GM12878 (cell line): ENCODE measurements at regions of chrX and their contacts with region 1.

Region 1: DNA sequence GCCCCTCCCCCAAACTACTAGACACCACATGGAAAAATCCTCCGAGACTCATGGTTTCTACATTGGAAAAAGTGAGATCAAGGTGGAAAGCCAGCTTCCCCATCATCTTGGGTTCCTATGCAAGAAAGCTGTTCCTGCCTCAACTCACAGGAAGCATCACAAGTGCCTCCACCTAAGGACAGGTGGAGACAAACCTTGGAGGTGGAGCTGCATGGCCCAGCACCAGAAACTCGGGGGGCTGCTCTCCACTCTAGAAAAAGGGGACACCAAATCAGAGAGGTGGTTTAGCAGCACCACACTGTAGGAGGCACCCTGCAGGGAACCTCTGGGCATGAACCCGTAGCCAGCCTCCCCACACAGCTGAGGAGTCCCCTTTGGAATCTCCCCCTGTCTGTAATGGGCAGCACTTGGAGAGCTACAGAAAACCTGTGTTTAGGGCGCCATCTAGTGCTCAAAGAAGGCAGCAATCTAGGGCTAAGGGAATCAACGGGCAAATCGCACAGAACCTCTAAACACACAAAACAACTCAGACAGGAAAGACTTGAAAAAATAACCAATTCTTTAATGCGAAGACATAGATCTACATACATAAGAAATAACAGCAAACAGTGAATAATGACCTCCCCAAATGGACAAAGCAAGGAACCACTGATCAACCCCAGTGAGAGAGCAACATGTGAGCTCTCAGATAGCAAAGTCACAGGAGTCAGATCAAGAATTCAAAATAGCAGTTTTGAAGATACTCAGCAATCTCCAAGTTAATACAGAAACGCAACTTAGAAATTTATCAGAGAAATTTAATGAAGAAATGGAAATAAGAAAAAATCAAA is 37.0 kb upstream of the ZBTB33 start:
- DNase-seq: peak; percentile 36
- ATAC-seq: peak; percentile 99
- H3K4me3 ChIP-seq: no peak overlapping the region
- H3K27ac ChIP-seq: no peak overlapping the region
- H3K4me1 ChIP-seq: no peaks in the 10 kb centered on the region
- H3K27me3 ChIP-seq: no peaks in the 10 kb centered on the region
- CTCF ChIP-seq: peak; percentile 81 to 94 (median 87)
- EP300 ChIP-seq: no peak
- POLR2A ChIP-seq: no peak
- RAD21 ChIP-seq: peak; percentile 78

Region 2: GRCh38 chrX:120029354-120029753 is 184.3 kb before region 1 on chrX:
- CTCF ChIA-PET with region 1: interaction called, 10 read pairs
- POLR2A ChIA-PET with region 1: no interaction called
- RAD21 ChIA-PET with region 1: interaction called, 4 read pairs
- SMC1A ChIA-PET with region 1: interaction called, 3 read pairs
- in situ Hi-C with region 1: no loop called
- intact Hi-C with region 1: loop called (anchors 10 kb)
- DNase-seq: no peak
- ATAC-seq: peak; percentile 71
- H3K4me3 ChIP-seq: no peak overlapping the region
- H3K27ac ChIP-seq: no peak overlapping the region
- H3K4me1 ChIP-seq: no peaks in the 10 kb centered on the region
- H3K27me3 ChIP-seq: no peaks in the 10 kb centered on the region
- CTCF ChIP-seq: peak in 2 of 3 experiments; percentile 13 to 22; a peak in 2 of 6 replicates
- EP300 ChIP-seq: no peak
- POLR2A ChIP-seq: no peak
- RAD21 ChIP-seq: no peak

Region 3: GRCh38 chrX:120200851-120201250 is 12.8 kb before region 1 on chrX:
- CTCF ChIA-PET with region 1: interaction called, 18 read pairs
- POLR2A ChIA-PET with region 1: no interaction called
- RAD21 ChIA-PET with region 1: interaction called, 5 read pairs
- SMC1A ChIA-PET with region 1: interaction called, 11 read pairs
- in situ Hi-C with region 1: no loop called
- intact Hi-C with region 1: no loop called
- DNase-seq: no peak
- ATAC-seq: no peak
- H3K4me3 ChIP-seq: no peak overlapping the region
- H3K27ac ChIP-seq: no peak overlapping the region
- H3K4me1 ChIP-seq: no peaks in the 10 kb centered on the region
- H3K27me3 ChIP-seq: no peaks in the 10 kb centered on the region; a peak in 1 of 4 replicates
- CTCF ChIP-seq: no peak
- EP300 ChIP-seq: no peak
- POLR2A ChIP-seq: no peak
- RAD21 ChIP-seq: no peak

Region 4: DNA sequence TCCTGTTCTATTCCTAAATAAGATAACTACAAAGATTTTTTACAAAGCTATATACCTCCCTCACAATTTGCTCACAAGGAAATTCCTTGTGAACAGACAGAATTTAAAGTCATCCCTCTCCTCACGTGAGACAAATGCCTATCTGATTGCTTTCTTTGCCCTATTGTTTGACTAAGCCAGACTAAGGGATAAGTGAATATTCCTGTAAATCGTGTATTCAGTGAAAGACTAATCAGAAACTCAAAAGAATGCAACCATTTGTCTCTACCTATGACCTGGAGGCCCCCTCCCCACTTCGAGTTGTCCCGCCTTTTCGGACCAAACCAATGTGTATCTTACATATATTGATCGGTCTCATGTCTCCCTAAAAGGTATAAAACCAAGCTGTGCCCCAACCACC is 21.6 kb after region 1 on chrX:
- CTCF ChIA-PET with region 1: interaction called, 51 read pairs
- POLR2A ChIA-PET with region 1: no interaction called
- RAD21 ChIA-PET with region 1: no interaction called
- SMC1A ChIA-PET with region 1: interaction called, 12 read pairs
- in situ Hi-C with region 1: no loop called
- intact Hi-C with region 1: no loop called
- DNase-seq: no peak
- ATAC-seq: no peak
- H3K4me3 ChIP-seq: no peak overlapping the region
- H3K27ac ChIP-seq: no peak overlapping the region
- H3K4me1 ChIP-seq: no peaks in the 10 kb centered on the region
- H3K27me3 ChIP-seq: no peaks in the 10 kb centered on the region
- CTCF ChIP-seq: no peak
- EP300 ChIP-seq: no peak
- POLR2A ChIP-seq: no peak
- RAD21 ChIP-seq: no peak

Region 5: GRCh38 chrX:120294651-120295050 is 81.0 kb after region 1 on chrX:
- CTCF ChIA-PET with region 1: interaction called, 29 read pairs
- POLR2A ChIA-PET with region 1: no interaction called
- RAD21 ChIA-PET with region 1: no interaction called
- SMC1A ChIA-PET with region 1: interaction called, 4 read pairs
- in situ Hi-C with region 1: no loop called
- intact Hi-C with region 1: no loop called
- DNase-seq: no peak
- ATAC-seq: no peak
- H3K4me3 ChIP-seq: no peak overlapping the region
- H3K27ac ChIP-seq: no peak overlapping the region
- H3K4me1 ChIP-seq: no peaks in the 10 kb centered on the region
- H3K27me3 ChIP-seq: no peaks in the 10 kb centered on the region
- CTCF ChIP-seq: no peak
- EP300 ChIP-seq: no peak
- POLR2A ChIP-seq: no peak
- RAD21 ChIP-seq: no peak

Region 6: DNA sequence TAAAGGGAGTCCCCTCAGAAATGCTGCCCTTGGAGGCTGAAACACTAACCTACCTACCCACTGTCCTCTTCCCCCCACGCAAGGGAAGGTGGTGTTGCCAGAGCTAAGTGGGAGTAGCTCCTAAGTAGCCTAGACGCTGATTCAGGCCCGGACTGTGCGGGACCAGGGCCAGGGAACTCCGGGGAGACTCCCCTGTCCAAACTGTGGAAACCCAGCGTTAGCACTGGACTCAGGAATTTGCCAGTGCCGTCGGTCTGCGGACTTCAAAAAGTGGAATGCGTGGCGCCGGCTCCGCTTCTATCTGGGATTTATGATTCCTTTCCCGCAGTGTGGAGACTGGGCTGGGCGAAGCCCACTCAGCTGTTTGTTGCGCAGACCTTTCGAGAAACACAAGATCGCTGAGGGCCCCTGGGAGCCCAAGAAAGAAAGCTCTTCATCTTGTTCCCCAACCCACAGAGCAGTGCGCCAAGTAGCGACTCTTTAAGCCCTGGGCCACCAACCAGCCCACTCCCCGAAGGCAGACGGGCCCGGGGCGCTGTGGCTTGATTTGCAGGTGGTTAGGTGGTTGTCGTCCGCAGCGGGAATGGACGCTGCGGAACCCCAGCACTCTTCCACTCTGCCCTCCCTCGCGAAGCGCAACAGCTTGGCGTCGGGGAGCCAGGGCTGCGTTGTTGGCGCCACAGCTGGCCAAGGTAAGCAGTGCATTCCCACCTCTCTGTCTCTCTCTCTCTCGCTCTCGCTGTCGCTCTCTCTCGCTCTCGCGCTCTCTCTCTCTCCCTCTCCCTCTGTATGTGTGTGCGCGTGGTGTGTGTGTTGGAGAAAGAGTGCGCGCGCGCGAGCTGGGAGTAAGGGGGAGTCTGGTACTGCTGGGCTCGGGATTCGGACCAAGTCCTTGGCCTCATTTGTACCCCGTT is 95.6 kb after region 1 on chrX:
- CTCF ChIA-PET with region 1: interaction called, 18 read pairs
- POLR2A ChIA-PET with region 1: no interaction called
- RAD21 ChIA-PET with region 1: interaction called, 4 read pairs
- SMC1A ChIA-PET with region 1: interaction called, 3 read pairs
- in situ Hi-C with region 1: no loop called
- intact Hi-C with region 1: no loop called
- DNase-seq: peak; percentile 47
- ATAC-seq: peak; percentile 95
- H3K4me3 ChIP-seq: peak overlapping the region; percentile 49
- H3K27ac ChIP-seq: no peak overlapping the region
- H3K4me1 ChIP-seq: no peaks in the 10 kb centered on the region; the same call in 1 of the 2 replicates
- H3K27me3 ChIP-seq: peaks cover 2 to 7% of the 10 kb centered on the region in 2 experiments; a peak in 3 of 4 replicates
- CTCF ChIP-seq: peak; percentile 70 to 72 (median 71)
- EP300 ChIP-seq: no peak
- POLR2A ChIP-seq: peak; percentile 74
- RAD21 ChIP-seq: peak; percentile 46